CD4-positive, alpha-beta T cell (primary cell): ENCODE measurements at regions of chr18 and their contacts with region 1.

Region 1: DNA sequence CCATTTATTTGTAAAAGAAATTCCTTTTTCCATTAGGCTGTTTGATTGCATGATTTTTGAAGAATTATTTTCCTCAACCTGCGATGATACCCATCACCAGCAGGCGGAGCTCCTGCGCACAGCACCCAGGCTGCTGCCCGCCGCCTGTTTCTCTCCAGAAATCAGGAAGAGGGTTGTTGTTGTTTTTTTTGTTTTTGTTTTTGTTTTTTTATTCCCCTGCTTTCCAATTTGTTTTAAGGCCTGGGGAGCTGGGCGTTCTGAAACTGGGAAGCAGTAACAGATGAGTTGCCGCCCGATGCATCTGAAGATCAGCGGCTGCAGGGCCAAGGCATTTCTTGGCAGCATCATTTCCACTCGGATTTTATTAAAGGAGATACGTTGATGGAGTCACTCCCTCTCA is 132.1 kb downstream of the MBP start:
- DNase-seq: peak in 13 of 14 experiments; percentile 34 to 78 (median 48)
- ATAC-seq: peak; percentile 56
- H3K4me3 ChIP-seq: no peak overlapping the region
- H3K4me3 Mint-ChIP-seq: no peak overlapping the region
- H3K27ac ChIP-seq: no peak overlapping the region
- H3K27ac Mint-ChIP-seq: no peak overlapping the region
- H3K4me1 ChIP-seq: peaks cover 17% of the 10 kb centered on the region
- H3K4me1 Mint-ChIP-seq: peaks cover 26% of the 10 kb centered on the region
- H3K27me3 ChIP-seq: no peaks in the 10 kb centered on the region
- H3K27me3 Mint-ChIP-seq: no peaks in the 10 kb centered on the region
- CTCF ChIP-seq: peak; percentile 99

Region 2: GRCh38 chr18:76977108-76977621 is 23.4 kb before region 1 on chr18:
- CTCF ChIA-PET with region 1: no interaction called
- POLR2A ChIA-PET with region 1: no interaction called
- intact Hi-C with region 1: no loop called
- DNase-seq: no peak
- ATAC-seq: no peak
- H3K4me3 ChIP-seq: no peak overlapping the region
- H3K4me3 Mint-ChIP-seq: no peak overlapping the region
- H3K27ac ChIP-seq: no peak overlapping the region
- H3K27ac Mint-ChIP-seq: no peak overlapping the region
- H3K4me1 ChIP-seq: no peaks in the 10 kb centered on the region
- H3K4me1 Mint-ChIP-seq: no peaks in the 10 kb centered on the region
- H3K27me3 ChIP-seq: no peaks in the 10 kb centered on the region
- H3K27me3 Mint-ChIP-seq: no peaks in the 10 kb centered on the region
- CTCF ChIP-seq: no peak

Region 3: GRCh38 chr18:77021075-77021474 is 20.5 kb after region 1 on chr18:
- CTCF ChIA-PET with region 1: no interaction called
- POLR2A ChIA-PET with region 1: no interaction called
- intact Hi-C with region 1: no loop called
- DNase-seq: no peak
- ATAC-seq: no peak
- H3K4me3 ChIP-seq: no peak overlapping the region
- H3K4me3 Mint-ChIP-seq: no peak overlapping the region
- H3K27ac ChIP-seq: no peak overlapping the region
- H3K27ac Mint-ChIP-seq: no peak overlapping the region
- H3K4me1 ChIP-seq: peaks cover 12% of the 10 kb centered on the region
- H3K4me1 Mint-ChIP-seq: peaks cover 23% of the 10 kb centered on the region
- H3K27me3 ChIP-seq: no peaks in the 10 kb centered on the region
- H3K27me3 Mint-ChIP-seq: no peaks in the 10 kb centered on the region
- CTCF ChIP-seq: no peak

Region 4: GRCh38 chr18:77054606-77055428 is 54.3 kb after region 1 on chr18:
- CTCF ChIA-PET with region 1: interaction called, 15 read pairs
- POLR2A ChIA-PET with region 1: interaction called, 4 read pairs
- intact Hi-C with region 1: loop called (anchors 1 kb)
- DNase-seq: peak; percentile 64 to 93 (median 78)
- ATAC-seq: peak; percentile 79
- H3K4me3 ChIP-seq: peak overlapping the region; percentile 47
- H3K4me3 Mint-ChIP-seq: peak overlapping the region; percentile 61
- H3K27ac ChIP-seq: peak overlapping the region; percentile 90 to 92
- H3K27ac Mint-ChIP-seq: peak overlapping the region; percentile 89
- H3K4me1 ChIP-seq: peaks cover 81% of the 10 kb centered on the region
- H3K4me1 Mint-ChIP-seq: peaks cover 69% of the 10 kb centered on the region
- H3K27me3 ChIP-seq: no peaks in the 10 kb centered on the region
- H3K27me3 Mint-ChIP-seq: no peaks in the 10 kb centered on the region
- CTCF ChIP-seq: peak; percentile 79

Region 5: GRCh38 chr18:77108001-77108692 is 107.6 kb after region 1 on chr18:
- CTCF ChIA-PET with region 1: interaction called, 3 read pairs
- POLR2A ChIA-PET with region 1: no interaction called
- intact Hi-C with region 1: loop called in 1 of 2 experiments (anchors 1 kb)
- DNase-seq: peak in 4 of 14 experiments; percentile 26 to 68 (median 52)
- ATAC-seq: peak; percentile 28
- H3K4me3 ChIP-seq: peak overlapping the region; percentile 1
- H3K4me3 Mint-ChIP-seq: peak overlapping the region; percentile 80
- H3K27ac ChIP-seq: peak overlapping the region; percentile 56 to 76
- H3K27ac Mint-ChIP-seq: peak overlapping the region; percentile 97
- H3K4me1 ChIP-seq: peaks cover 93% of the 10 kb centered on the region
- H3K4me1 Mint-ChIP-seq: peaks cover 92% of the 10 kb centered on the region
- H3K27me3 ChIP-seq: no peaks in the 10 kb centered on the region
- H3K27me3 Mint-ChIP-seq: no peaks in the 10 kb centered on the region
- CTCF ChIP-seq: no peak

Region 6: GRCh38 chr18:77147418-77147852 is 146.9 kb after region 1 on chr18:
- CTCF ChIA-PET with region 1: no interaction called
- POLR2A ChIA-PET with region 1: no interaction called
- intact Hi-C with region 1: loop called in 1 of 2 experiments (anchors 5 kb)
- DNase-seq: peak in 5 of 14 experiments; percentile 19 to 59 (median 52)
- ATAC-seq: peak; percentile 72
- H3K4me3 ChIP-seq: no peak overlapping the region
- H3K4me3 Mint-ChIP-seq: peak overlapping the region; percentile 3
- H3K27ac ChIP-seq: no peak overlapping the region
- H3K27ac Mint-ChIP-seq: peak overlapping the region; percentile 84
- H3K4me1 ChIP-seq: peaks cover 21% of the 10 kb centered on the region
- H3K4me1 Mint-ChIP-seq: peaks cover 36% of the 10 kb centered on the region
- H3K27me3 ChIP-seq: no peaks in the 10 kb centered on the region
- H3K27me3 Mint-ChIP-seq: no peaks in the 10 kb centered on the region
- CTCF ChIP-seq: no peak

Region 7: GRCh38 chr18:77650799-77651385 is 650.4 kb after region 1 on chr18:
- CTCF ChIA-PET with region 1: no interaction called
- POLR2A ChIA-PET with region 1: no interaction called
- intact Hi-C with region 1: loop called in 1 of 2 experiments (anchors 5 kb)
- DNase-seq: peak in 13 of 14 experiments; percentile 15 to 66 (median 36)
- ATAC-seq: peak; percentile 44
- H3K4me3 ChIP-seq: no peak overlapping the region
- H3K4me3 Mint-ChIP-seq: no peak overlapping the region
- H3K27ac ChIP-seq: no peak overlapping the region
- H3K27ac Mint-ChIP-seq: no peak overlapping the region
- H3K4me1 ChIP-seq: peaks cover 5% of the 10 kb centered on the region
- H3K4me1 Mint-ChIP-seq: no peaks in the 10 kb centered on the region
- H3K27me3 ChIP-seq: peaks cover 6 to 14% of the 10 kb centered on the region in 2 experiments
- H3K27me3 Mint-ChIP-seq: peaks cover 24% of the 10 kb centered on the region
- CTCF ChIP-seq: peak; percentile 52